Naive thymus-derived CD8-positive, alpha-beta T cell (primary cell): ENCODE measurements at regions of chr15 and their contacts with region 1.

Region 1: DNA sequence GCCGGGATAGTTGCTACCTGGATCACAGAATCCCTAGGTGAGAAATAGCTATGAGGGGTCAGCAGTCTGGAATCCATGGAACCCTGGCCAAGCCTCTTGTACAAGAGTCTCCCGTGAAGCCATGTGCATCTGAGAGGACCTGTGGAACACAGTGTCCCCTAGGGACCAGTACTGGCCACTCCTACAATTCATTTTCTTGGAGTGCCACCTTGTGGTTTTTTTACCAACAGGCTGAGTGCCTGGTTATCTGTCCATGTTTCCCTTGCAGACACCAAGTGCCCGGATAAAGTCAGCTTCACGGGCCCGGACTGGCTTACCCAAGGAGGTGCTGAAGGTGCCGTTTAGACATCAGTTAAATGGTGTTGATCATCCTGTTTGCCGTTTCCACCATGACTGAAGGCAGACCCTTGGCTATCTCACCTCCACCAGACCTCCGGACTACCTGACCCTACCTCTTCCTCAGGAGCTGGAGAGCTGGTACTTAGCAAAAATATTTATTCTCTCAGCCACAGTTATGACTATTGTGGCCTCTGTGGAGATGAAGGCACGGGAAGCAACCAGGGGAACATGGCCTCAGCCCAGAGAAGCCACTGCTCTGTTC is 93.9 kb downstream of the RBPMS2 start:
- DNase-seq: no peak
- ATAC-seq: peak in 1 of 2 donors; percentile 30
- H3K4me3 Mint-ChIP-seq: no peak overlapping the region
- H3K27ac Mint-ChIP-seq: peak overlapping the region in 9 of 10 donors; percentile 30 to 82 (median 58)
- H3K4me1 Mint-ChIP-seq: peaks cover 0 to 27% (median 15%) of the 10 kb centered on the region in 4 donors
- H3K27me3 Mint-ChIP-seq: no peaks in the 10 kb centered on the region

Region 2: DNA sequence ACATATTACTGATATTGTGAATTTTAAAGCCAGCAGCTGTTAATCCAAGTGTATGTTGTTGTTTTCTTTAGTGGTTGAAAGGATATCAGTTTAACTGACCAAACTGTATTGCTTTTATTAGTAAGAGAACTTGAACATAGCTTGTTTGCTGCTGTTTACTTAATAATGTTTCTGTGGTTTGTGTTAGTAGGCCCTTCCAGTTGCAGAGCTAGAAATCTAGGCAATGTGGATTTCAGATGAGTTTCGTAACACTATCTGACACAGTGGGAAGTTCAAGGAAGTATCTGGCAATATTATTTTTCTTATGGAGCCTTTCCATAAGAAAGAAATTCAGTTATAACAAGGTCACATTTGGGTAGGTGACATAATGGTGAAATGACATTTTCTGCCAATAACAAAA is 202.7 kb before region 1 on chr15:
- POLR2A ChIA-PET with region 1: interaction called, 10 read pairs
- DNase-seq: no peak
- ATAC-seq: no peak
- H3K4me3 Mint-ChIP-seq: no peak overlapping the region
- H3K27ac Mint-ChIP-seq: peak overlapping the region in 3 of 10 donors; percentile 15 to 80 (median 16)
- H3K4me1 Mint-ChIP-seq: peaks cover 31 to 56% (median 51%) of the 10 kb centered on the region in 4 donors
- H3K27me3 Mint-ChIP-seq: no peaks in the 10 kb centered on the region

Region 3: DNA sequence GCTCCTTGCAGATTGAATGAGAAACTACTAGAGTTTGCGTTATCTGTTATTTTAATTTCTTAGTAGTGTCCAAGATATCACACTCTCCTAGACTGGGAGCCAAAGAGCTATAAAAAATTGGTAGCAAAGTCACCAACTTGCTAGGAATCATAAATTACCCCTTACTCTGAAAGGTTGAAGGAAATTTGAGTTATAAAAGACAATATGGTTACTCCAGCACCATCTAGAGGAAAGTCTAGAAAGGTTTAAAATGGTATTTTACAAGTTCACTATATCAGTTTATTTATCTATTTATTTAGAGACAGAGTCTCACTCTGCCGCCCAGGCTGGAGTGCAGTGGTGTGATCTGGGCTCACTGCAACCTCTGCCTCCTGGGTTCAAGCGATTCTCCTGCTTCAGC is 27.8 kb before region 1 on chr15:
- POLR2A ChIA-PET with region 1: no interaction called
- DNase-seq: peak in 3 of 10 donors; percentile 34 to 39 (median 37)
- ATAC-seq: no peak
- H3K4me3 Mint-ChIP-seq: peak overlapping the region in 1 of 10 donors; percentile 45
- H3K27ac Mint-ChIP-seq: peak overlapping the region in 8 of 10 donors; percentile 47 to 93 (median 68)
- H3K4me1 Mint-ChIP-seq: peaks cover 10 to 49% (median 35%) of the 10 kb centered on the region in 4 donors
- H3K27me3 Mint-ChIP-seq: no peaks in the 10 kb centered on the region

Region 4: DNA sequence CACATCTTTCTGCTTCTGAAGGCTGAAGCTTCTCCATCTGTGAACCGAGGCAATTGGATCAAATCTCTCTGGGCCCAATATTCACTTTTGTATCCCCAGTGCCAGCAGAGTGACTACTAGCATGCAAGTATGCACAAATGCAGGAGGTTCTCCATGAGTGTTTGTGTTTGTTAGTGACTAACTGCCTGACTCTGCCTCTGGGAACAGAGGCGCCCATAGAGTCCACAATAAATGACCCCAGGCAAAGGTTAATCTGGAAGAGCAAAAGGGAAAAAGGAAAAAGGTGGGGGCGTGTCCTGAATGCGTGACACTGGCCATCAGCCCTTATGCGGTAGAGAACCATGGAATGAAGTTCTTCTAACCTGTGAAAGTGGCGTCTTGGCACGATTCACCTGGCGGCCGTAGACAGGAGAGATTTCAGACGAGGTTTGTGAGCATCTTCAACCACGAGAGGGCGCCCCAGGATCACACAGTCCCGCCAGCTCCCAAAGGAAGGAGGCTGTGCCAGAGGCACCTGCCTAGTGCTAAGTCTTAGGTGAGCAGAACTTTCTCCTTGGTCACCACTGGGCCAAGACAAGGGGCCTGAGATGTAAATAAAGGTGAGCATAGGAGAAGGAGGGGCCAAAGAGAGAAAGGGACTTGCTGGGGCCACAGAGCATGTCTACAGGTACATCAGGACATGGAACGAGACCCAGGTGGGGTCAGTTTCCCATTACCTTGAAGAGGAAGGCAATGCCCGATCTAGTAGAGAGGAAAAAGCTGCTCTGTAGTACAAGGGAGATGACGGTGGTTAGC is 49.7 kb after region 1 on chr15:
- POLR2A ChIA-PET with region 1: interaction called, 15 read pairs
- DNase-seq: peak; percentile 72 to 90 (median 80)
- ATAC-seq: peak; percentile 82 to 86
- H3K4me3 Mint-ChIP-seq: no peak overlapping the region
- H3K27ac Mint-ChIP-seq: peak overlapping the region in 1 of 10 donors; percentile 22
- H3K4me1 Mint-ChIP-seq: peaks cover 7 to 15% (median 9%) of the 10 kb centered on the region in 4 donors
- H3K27me3 Mint-ChIP-seq: peaks cover 0 to 4% (median 2%) of the 10 kb centered on the region in 5 donors

Region 5: DNA sequence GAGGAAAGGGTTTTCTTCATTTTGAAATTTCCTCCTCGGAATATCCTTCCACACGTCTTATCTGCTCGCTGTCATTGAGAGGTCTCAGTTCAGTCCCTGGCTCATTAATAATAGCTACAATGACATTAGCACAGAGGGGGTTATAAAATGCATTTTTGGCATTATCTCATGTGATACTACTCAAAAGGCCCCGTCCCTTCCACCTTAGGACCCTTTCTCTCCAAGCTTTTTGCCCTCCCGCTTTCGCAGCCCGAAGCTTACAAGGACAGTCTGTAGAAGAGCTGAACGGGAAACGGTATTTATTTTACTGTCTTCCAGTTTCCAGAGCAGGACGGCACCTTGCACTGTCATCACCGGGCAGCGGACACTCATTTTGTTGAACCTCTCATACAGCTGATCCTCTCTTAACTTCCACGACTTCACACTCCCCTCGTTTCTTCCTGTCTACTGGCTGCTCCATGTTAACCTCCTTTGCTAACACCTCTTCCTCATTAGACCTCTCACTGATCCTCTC is 154.6 kb after region 1 on chr15:
- POLR2A ChIA-PET with region 1: no interaction called
- DNase-seq: no peak
- ATAC-seq: no peak
- H3K4me3 Mint-ChIP-seq: peak overlapping the region; percentile 58 to 80 (median 72)
- H3K27ac Mint-ChIP-seq: peak overlapping the region; percentile 24 to 90 (median 86)
- H3K4me1 Mint-ChIP-seq: peaks cover 34 to 55% (median 53%) of the 10 kb centered on the region in 4 donors
- H3K27me3 Mint-ChIP-seq: no peaks in the 10 kb centered on the region